ENCODE measurements at regions of chr2 and their contacts with region 1.

Region 1: DNA sequence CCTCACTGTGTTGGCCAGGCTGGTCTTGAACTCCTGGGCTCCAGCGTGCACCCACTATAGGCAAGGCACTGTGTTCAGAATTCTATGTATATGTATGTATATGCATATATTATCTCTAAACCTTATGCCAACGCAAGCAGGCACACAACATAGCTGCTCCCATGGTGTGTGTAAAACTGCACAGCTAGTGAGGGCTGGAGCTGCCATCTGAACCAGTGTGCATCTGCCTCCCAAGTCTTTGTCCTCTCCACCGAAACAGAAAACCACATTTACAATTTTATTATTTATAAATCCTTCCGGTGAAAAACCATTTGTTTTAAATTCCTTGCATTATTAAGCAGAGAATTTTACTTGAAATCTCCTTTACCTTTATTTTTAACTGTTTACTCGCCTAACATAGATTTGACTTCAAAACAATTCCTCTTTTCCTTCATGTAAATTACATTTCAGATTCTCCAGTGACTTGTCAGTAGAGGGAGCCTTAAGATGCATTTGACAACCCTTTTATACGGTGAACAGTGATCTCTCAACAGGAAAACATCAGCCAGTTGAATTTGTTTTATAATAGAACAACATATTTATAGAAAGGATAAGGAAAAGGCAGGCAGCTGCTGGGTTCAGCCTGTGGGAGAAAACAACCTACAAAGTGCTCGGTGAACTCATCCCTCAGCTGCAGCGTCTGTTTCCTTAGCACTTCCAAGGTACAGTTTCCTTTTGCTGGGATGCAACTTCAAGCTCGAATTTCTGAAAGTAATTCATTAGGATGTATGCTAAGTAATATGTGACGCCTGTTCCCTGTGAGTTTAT is 101.2 kb downstream of the MYT1L start:
- DNase-seq: peak; percentile 44
- H3K4me3 ChIP-seq: no peak overlapping the region
- H3K27ac ChIP-seq: peak overlapping the region in 1 of 2 experiments; percentile 50; a peak in 2 of 4 replicates
- H3K4me1 ChIP-seq: peaks cover 0 to 13% of the 10 kb centered on the region in 2 experiments; a peak in 2 of 4 replicates
- H3K27me3 ChIP-seq: no peaks in the 10 kb centered on the region
- CTCF ChIP-seq: peak; percentile 40
- EP300 ChIP-seq: no peak
- RAD21 ChIP-seq: peak; percentile 74

Region 2: GRCh38 chr2:2101924-2102323 is 127.9 kb before region 1 on chr2:
- CTCF ChIA-PET with region 1: no interaction called
- POLR2A ChIA-PET with region 1: no interaction called
- DNase-seq: peak; percentile 55
- H3K4me3 ChIP-seq: no peak overlapping the region
- H3K27ac ChIP-seq: no peak overlapping the region
- H3K4me1 ChIP-seq: peaks cover 0 to 37% of the 10 kb centered on the region in 2 experiments; a peak in 2 of 4 replicates
- H3K27me3 ChIP-seq: no peaks in the 10 kb centered on the region
- CTCF ChIP-seq: peak; percentile 32
- EP300 ChIP-seq: no peak
- RAD21 ChIP-seq: peak; percentile 26; the same call in 1 of the 2 replicates

Region 3: GRCh38 chr2:2243666-2244065 is 13.8 kb after region 1 on chr2:
- CTCF ChIA-PET with region 1: interaction called, 16 read pairs
- POLR2A ChIA-PET with region 1: interaction called, 3 read pairs
- DNase-seq: no peak
- H3K4me3 ChIP-seq: no peak overlapping the region
- H3K27ac ChIP-seq: no peak overlapping the region; a peak in 1 of 4 replicates
- H3K4me1 ChIP-seq: peaks cover 0 to 9% of the 10 kb centered on the region in 2 experiments; a peak in 2 of 4 replicates
- H3K27me3 ChIP-seq: no peaks in the 10 kb centered on the region
- CTCF ChIP-seq: no peak
- EP300 ChIP-seq: no peak
- RAD21 ChIP-seq: no peak

Region 4: DNA sequence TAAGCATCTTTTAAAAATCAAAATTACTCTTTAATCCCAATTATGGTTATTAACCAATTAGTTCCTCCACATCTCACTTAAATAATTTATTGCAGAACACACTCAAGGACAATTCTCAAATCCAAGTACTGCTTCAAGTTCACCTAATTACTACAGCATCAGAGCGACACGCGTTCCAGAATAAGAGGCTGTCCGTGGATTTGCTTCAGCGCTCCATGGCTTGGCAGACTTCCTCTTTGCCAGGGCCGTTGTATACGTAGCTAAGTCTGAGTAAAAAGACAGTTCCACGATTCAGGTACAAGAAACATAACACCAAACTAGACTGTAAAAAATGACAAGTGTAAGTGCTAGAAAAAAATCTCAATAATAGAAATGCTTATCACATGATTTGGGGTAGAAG is 254.5 kb after region 1 on chr2:
- CTCF ChIA-PET with region 1: no interaction called
- POLR2A ChIA-PET with region 1: no interaction called
- DNase-seq: no peak
- H3K4me3 ChIP-seq: no peak overlapping the region
- H3K27ac ChIP-seq: no peak overlapping the region
- H3K4me1 ChIP-seq: no peaks in the 10 kb centered on the region
- H3K27me3 ChIP-seq: no peaks in the 10 kb centered on the region
- CTCF ChIP-seq: no peak
- EP300 ChIP-seq: no peak
- RAD21 ChIP-seq: no peak

Region 5: GRCh38 chr2:2686222-2686621 is 456.4 kb after region 1 on chr2:
- CTCF ChIA-PET with region 1: no interaction called
- POLR2A ChIA-PET with region 1: no interaction called
- DNase-seq: no peak
- H3K4me3 ChIP-seq: no peak overlapping the region
- H3K27ac ChIP-seq: no peak overlapping the region
- H3K4me1 ChIP-seq: no peaks in the 10 kb centered on the region
- H3K27me3 ChIP-seq: no peaks in the 10 kb centered on the region
- CTCF ChIP-seq: no peak
- EP300 ChIP-seq: no peak
- RAD21 ChIP-seq: no peak

Measured in SK-N-SH (cell line).